ENCODE measurements at regions of chr17 and their contacts with region 1.

Region 1: DNA sequence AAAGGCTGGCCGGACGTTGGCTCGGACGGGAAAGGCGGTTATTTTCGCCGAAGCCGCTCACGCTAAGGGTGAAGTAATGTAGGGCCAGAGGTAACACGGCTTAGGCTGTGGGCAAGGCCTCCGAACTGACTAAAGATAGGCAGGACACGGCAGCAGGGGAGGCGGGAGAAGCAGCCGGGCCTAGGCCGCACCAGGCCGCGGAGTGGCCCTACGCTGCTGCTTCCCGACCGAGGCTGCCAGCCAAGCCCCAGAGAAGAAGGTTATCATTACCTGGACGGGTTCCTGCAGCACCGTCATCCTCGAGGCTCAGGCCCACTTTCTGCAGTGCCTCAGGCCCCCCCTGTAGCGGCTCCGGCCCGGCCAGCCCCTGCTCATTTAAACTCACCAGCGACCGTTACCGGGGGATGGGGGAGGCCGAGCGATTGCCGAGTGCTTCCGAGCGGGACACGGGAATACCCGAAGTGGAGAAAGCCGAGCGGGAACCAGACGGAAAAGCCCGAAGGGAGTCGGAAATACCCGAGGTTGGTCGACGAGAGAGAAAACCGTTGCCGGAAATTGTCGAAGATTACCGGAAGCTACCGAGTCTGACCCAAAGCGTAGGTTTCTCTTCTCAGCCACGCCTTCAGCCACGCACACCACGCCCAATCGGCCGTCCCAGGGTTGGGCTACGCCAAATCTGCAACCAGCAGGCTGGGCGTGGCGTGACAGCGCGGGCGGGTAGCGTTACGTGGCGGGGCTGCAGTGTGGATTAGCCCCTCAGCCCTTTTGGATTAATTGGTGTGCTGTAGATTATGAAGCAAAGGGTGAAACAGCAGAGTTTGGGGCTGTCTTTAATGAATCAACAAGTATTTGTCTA is at the start of gene CDC27:
- DNase-seq: peak; percentile 99
- ATAC-seq: peak; percentile 92
- H3K4me3 Mint-ChIP-seq: peak within 1 kb of the TSS; percentile 94
- H3K27ac Mint-ChIP-seq: peak within 1 kb of the TSS; percentile 92
- H3K4me1 Mint-ChIP-seq: peaks cover 57% of the 10 kb centered on the region
- H3K27me3 Mint-ChIP-seq: no peaks in the 10 kb centered on the region
- CTCF ChIP-seq: no peak
- total RNA-seq, gene CDC27: 72.5 and 76.5 TPM in 2 replicates

Region 2: GRCh38 chr17:47099987-47100711 is 89.0 kb before region 1 on chr17:
- CTCF ChIA-PET with region 1: no interaction called
- POLR2A ChIA-PET with region 1: no interaction called
- intact Hi-C with region 1: loop called (anchors 1 kb)
- DNase-seq: peak; percentile 85
- ATAC-seq: peak; percentile 98
- H3K4me3 Mint-ChIP-seq: peak overlapping the region; percentile 98
- H3K27ac Mint-ChIP-seq: peak overlapping the region; percentile 95
- H3K4me1 Mint-ChIP-seq: peaks cover 40% of the 10 kb centered on the region
- H3K27me3 Mint-ChIP-seq: no peaks in the 10 kb centered on the region
- CTCF ChIP-seq: no peak

Region 3: DNA sequence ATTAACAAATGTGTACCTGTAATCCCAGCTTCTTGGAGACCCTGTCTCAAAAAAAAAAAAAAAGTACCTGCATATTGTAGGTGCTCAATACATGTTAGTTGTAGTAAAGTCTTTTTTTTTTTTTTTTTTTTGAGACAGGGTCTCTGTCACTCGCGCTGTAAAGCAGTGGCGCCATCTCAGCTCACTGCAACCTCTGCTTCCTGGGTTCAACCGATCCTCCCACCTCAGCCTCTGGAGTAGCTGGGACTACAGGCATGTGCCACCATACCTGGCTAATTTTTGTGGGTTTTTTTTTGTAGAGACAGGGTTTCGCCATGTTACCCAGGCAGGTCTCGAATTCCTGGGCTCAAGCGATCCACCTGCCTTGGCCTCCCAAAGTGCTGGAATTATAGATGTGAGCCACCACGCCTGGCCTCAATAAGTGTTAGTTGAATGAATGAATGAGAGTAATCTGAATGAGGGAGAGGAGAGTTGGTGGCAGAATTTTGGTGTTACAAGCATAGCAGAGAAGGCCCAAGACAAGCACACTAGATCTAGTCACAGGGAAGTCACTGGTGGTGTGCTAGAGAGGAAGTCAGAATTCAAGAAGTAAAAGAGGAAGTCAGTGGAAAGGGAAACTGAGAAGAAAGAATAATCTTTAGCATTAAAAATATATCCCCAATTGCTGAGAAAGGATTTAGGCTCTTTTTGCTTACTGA is 10.7 kb after region 1 on chr17:
- CTCF ChIA-PET with region 1: interaction called, 3 read pairs
- POLR2A ChIA-PET with region 1: interaction called, 50 read pairs
- intact Hi-C with region 1: loop called (anchors 1 kb)
- DNase-seq: no peak
- ATAC-seq: peak; percentile 73
- H3K4me3 Mint-ChIP-seq: peak overlapping the region; percentile 62
- H3K27ac Mint-ChIP-seq: peak overlapping the region; percentile 99
- H3K4me1 Mint-ChIP-seq: peaks cover 40% of the 10 kb centered on the region
- H3K27me3 Mint-ChIP-seq: no peaks in the 10 kb centered on the region
- CTCF ChIP-seq: no peak

Measured in activated B cell treated with CpG ODN at 0.5 μM for 24 hours (primary cell).